CD4-positive, alpha-beta memory T cell (primary cell): ENCODE measurements at regions of chr7 and their contacts with region 1.

Region 1: GRCh38 chr7:90244909-90245851 is at the start of gene CFAP69:
- DNase-seq: peak; percentile 83 to 89 (median 84)
- H3K4me3 ChIP-seq: peak within 1 kb of the TSS; percentile 43 to 62
- H3K4me3 Mint-ChIP-seq: peak within 1 kb of the TSS; percentile 88 to 95 (median 92)
- H3K27ac ChIP-seq: peak within 1 kb of the TSS; percentile 9
- H3K27ac Mint-ChIP-seq: peak within 1 kb of the TSS; percentile 71 to 89 (median 77)
- H3K4me1 ChIP-seq: peaks cover 17% of the 10 kb centered on the region
- H3K4me1 Mint-ChIP-seq: peaks cover 12 to 25% (median 23%) of the 10 kb centered on the region in 4 donors
- H3K27me3 ChIP-seq: peaks cover 14% of the 10 kb centered on the region
- H3K27me3 Mint-ChIP-seq: peaks cover 12 to 21% of the 10 kb centered on the region in 2 donors
- total RNA-seq, gene CFAP69: 0.58 TPM in 1 of 2 experiments, not detected in the other

Region 2: GRCh38 chr7:90346336-90347125 is 101.4 kb after region 1 on chr7 and contains the start of gene GTPBP10:
- CTCF ChIA-PET with region 1: no interaction called
- POLR2A ChIA-PET with region 1: interaction called, 3 read pairs
- intact Hi-C with region 1: loop called (anchors 1 kb)
- DNase-seq: peak; percentile 92 to 95 (median 94)
- H3K4me3 ChIP-seq: peak within 1 kb of the TSS; percentile 71 to 92
- H3K4me3 Mint-ChIP-seq: peak within 1 kb of the TSS; percentile 92 to 99 (median 98)
- H3K27ac ChIP-seq: peak within 1 kb of the TSS; percentile 87
- H3K27ac Mint-ChIP-seq: peak within 1 kb of the TSS; percentile 98 to 100 (median 99)
- H3K4me1 ChIP-seq: peaks cover 38% of the 10 kb centered on the region
- H3K4me1 Mint-ChIP-seq: peaks cover 30 to 54% (median 44%) of the 10 kb centered on the region in 4 donors
- H3K27me3 ChIP-seq: no peaks in the 10 kb centered on the region
- H3K27me3 Mint-ChIP-seq: peaks cover 0 to 1% of the 10 kb centered on the region in 2 donors
- total RNA-seq, gene GTPBP10: 45.5 to 46.7 TPM

Region 3: DNA sequence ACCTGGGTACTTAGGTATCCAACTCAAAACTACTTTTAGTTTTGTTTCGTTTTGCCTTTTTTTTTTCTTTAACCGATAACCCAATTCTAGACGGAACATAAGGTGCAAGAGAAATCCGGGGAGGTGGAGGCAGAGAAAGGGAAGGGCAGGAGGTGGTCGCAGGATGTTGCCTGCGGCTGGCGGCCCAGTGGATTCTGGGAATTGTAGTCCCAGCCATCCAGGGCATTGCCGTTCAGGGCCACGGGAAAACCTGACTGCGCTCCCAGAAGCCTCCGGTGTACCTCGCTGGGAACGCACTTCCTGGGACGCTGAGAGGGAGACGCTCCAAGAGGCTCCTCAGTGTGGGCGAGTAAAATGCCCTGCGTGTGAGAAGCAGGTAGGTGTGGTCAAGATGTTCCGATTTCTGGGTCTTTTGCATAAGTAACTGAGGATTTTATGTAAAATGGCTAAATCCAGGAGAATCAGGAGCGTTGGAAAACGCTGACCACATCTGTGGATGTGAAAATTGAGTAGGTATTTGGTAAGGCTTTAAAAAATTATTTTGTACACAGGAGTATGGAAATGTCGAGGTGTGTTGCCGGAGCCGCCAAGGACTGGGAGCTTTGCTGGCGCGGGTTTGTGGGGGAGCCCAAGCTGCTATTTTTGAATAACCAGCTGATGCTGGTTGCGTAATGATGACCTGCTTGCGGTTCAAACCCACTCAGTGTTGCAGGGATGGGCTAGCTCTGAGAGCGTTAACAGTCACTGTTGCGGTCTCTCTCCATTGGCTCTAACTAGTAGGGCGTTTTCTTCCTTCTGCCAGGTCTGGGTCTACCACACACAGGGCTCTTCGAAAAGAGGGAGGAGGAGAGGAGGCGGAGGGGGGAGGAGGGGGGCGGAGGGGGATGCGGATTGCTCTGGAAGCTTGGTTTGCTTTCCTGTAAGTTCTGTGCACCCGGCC is 158.3 kb after region 1 on chr7 and contains the start of gene CLDN12:
- CTCF ChIA-PET with region 1: no interaction called
- POLR2A ChIA-PET with region 1: no interaction called
- intact Hi-C with region 1: loop called (anchors 10 kb)
- DNase-seq: peak; percentile 78 to 94 (median 82)
- H3K4me3 ChIP-seq: peak within 1 kb of the TSS; percentile 89 to 90
- H3K4me3 Mint-ChIP-seq: peak within 1 kb of the TSS; percentile 92 to 98 (median 96)
- H3K27ac ChIP-seq: peak within 1 kb of the TSS; percentile 72
- H3K27ac Mint-ChIP-seq: peak within 1 kb of the TSS; percentile 92 to 98 (median 96)
- H3K4me1 ChIP-seq: peaks cover 10% of the 10 kb centered on the region
- H3K4me1 Mint-ChIP-seq: peaks cover 7 to 21% (median 13%) of the 10 kb centered on the region in 4 donors
- H3K27me3 ChIP-seq: no peaks in the 10 kb centered on the region
- H3K27me3 Mint-ChIP-seq: no peaks in the 10 kb centered on the region
- total RNA-seq, gene CLDN12: 5.7 to 6.1 TPM